Transverse colon (tissue), 4 donors: ENCODE measurements at regions of chr19 and their contacts with region 1.

Region 1: DNA sequence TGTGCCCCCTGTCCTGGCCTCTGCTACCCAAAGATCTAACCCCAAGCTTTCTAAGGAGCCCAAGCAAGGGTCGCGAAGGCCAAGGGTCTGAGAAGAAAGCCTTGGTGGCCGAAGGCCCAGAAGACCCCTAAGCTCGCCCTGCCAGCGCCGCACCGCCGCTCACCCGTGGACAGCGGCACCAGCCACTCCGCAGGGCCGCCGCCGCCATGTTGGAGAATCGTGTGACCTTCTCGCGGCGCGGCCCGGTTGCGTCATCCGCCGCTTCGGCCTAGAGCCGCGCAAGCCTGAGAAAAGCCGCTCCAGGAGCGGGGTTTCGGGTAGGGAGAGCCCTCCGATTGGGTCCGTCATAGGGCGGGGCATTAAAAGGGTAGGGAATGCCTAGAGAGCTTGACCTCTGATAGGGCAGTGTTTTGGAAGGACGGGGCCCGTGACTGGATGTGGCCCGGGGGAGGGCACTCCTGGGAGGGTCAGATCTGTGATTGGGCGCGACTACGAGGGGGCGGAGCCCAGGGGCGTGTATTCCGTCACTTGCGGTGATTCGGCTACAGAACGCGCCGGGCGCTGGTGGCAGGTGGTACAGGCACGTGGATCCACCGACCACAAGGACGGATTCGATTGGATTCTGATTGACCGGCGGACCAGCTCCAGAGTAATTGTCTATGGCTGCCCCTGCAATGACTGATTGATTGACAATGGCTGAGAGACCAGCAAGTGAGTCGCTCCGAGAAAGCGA is at the start of gene TIMM44:
- DNase-seq: peak; percentile 99
- H3K4me3 ChIP-seq: peak within 1 kb of the TSS; percentile 68 to 93 (median 80)
- H3K27ac ChIP-seq: peak within 1 kb of the TSS; percentile 90 to 98 (median 96)
- H3K4me1 ChIP-seq: peaks cover 5 to 26% (median 12%) of the 10 kb centered on the region in 4 donors
- H3K27me3 ChIP-seq: no peaks in the 10 kb centered on the region
- CTCF ChIP-seq: no peak
- EP300 ChIP-seq: no peak
- POLR2A ChIP-seq: peak; percentile 86
- total RNA-seq, gene TIMM44: 59.7 to 102 (median 71.8) TPM

Region 2: GRCh38 chr19:7888145-7888825 is 55.3 kb before region 1 on chr19 and contains the start of gene LRRC8E:
- in situ Hi-C with region 1: no loop called
- intact Hi-C with region 1: no loop called
- DNase-seq: peak; percentile 79
- H3K4me3 ChIP-seq: peak within 1 kb of the TSS in 3 of 4 donors; percentile 36 to 48 (median 43)
- H3K27ac ChIP-seq: peak within 1 kb of the TSS in 1 of 4 donors; percentile 29
- H3K4me1 ChIP-seq: peaks cover 0 to 11% (median 9%) of the 10 kb centered on the region in 4 donors
- H3K27me3 ChIP-seq: peaks cover 38% of the 10 kb centered on the region
- CTCF ChIP-seq: no peak
- EP300 ChIP-seq: no peak
- POLR2A ChIP-seq: peak; percentile 30
- total RNA-seq, gene LRRC8E: 0.79 to 1.5 TPM in 2 of 4 donors, not detected in the others

Region 3: GRCh38 chr19:7982651-7983099 is 39.1 kb after region 1 on chr19:
- in situ Hi-C with region 1: no loop called
- intact Hi-C with region 1: loop called (anchors 5 kb)
- DNase-seq: no peak
- H3K4me3 ChIP-seq: no peak overlapping the region
- H3K27ac ChIP-seq: no peak overlapping the region
- H3K4me1 ChIP-seq: peaks cover 0 to 13% (median 0%) of the 10 kb centered on the region in 4 donors
- H3K27me3 ChIP-seq: no peaks in the 10 kb centered on the region
- CTCF ChIP-seq: no peak
- EP300 ChIP-seq: no peak
- POLR2A ChIP-seq: no peak

Region 4: DNA sequence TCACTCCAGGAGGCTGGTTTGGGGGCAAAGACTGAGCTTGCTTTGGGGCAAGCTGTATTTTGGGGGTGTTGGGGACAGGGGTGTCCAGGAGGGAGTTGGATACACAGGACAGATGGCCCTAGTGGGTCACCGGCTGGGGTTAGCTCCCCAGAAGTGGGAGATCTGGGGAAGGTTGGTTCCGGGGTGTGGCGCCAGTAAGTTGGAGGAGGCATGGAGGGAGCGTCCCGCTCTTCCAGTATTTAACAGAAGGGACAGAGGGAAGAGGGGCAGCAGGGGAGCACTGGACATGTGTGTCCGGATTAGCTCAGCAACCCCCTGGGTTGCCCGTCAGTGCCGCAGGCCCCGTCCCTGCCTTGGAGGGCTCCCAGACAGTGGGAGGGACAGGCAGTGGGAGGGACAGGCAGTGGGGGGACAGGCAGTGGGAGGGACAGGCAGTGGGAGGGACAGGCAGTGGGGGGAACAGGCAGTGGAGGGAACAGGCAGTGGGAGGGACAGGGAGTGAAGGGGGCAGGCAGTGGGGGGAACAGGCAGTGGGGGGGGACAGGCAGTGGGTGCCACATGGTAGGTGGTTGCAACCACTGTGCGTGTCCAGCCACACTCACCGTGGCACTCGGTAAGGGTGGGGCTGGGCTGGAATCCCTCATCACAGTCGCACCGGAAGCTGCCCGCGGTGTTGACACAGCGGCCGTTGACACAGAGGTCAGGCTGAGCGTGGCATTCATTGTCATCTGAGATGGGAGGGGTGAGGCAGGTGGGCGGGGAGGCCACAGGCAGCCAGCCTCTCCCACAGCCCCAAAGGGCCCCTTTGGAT is 142.2 kb after region 1 on chr19:
- in situ Hi-C with region 1: no loop called
- intact Hi-C with region 1: no loop called
- DNase-seq: peak; percentile 17
- H3K4me3 ChIP-seq: no peak overlapping the region
- H3K27ac ChIP-seq: no peak overlapping the region
- H3K4me1 ChIP-seq: no peaks in the 10 kb centered on the region
- H3K27me3 ChIP-seq: no peaks in the 10 kb centered on the region
- CTCF ChIP-seq: no peak
- EP300 ChIP-seq: no peak
- POLR2A ChIP-seq: no peak